Activated CD8-positive, alpha-beta T cell treated with anti-CD3 and anti-CD28 coated beads for 36 hours (primary cell): ENCODE measurements at regions of chr17 and their contacts with region 1.

Region 1: DNA sequence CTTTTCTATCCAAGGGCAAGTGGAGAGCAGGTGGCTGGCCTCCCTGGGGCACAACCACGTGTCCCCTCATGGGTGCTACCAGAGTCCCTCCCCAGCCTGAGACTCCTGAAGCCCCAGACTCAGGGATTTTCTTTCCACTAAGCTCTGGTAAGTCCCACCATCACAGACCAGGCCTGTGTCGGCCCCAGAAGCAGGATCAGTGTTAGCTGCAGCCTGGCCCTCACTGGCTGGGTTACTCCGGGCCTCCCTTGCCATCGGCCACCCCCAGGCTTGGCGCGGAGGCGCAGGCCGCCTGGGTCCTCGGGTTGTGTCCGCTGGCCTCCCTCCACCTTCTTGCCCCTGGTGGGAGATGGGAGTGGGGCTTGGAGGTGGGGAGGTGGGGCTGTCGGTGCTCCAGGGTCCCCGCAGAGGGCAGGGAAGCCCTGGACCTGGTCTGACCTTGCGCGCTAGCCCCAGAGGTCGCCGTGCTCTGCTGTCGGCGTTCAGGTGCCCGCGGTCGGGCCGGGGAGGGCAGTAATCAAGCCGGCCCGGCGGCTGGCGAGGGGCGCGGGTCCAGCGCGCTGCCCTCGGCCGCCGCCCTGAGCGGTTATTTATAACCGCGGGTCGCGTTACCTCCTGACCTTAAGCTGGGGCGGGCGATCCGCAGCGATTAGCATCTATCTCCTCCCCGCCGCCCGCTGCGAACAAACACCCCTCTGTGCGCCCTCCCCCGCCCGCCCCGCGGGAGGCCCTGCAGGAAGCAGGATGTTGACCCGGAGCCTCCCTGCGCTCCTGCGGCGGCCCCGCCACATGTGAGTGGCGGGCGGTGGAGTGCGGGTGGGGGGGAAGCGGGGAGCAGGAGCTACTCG is 78.1 kb upstream of the TOB1 start:
- DNase-seq: peak; percentile 89
- ATAC-seq: peak; percentile 88
- H3K4me3 Mint-ChIP-seq: peak overlapping the region; percentile 79
- H3K27ac Mint-ChIP-seq: peak overlapping the region; percentile 86
- H3K4me1 Mint-ChIP-seq: peaks cover 25% of the 10 kb centered on the region
- H3K27me3 Mint-ChIP-seq: no peaks in the 10 kb centered on the region
- CTCF ChIP-seq: no peak

Region 2: GRCh38 chr17:50806141-50806643 is 138.1 kb before region 1 on chr17:
- CTCF ChIA-PET with region 1: no interaction called
- POLR2A ChIA-PET with region 1: no interaction called
- intact Hi-C with region 1: no loop called
- DNase-seq: peak; percentile 14
- ATAC-seq: no peak
- H3K4me3 Mint-ChIP-seq: no peak overlapping the region
- H3K27ac Mint-ChIP-seq: no peak overlapping the region
- H3K4me1 Mint-ChIP-seq: no peaks in the 10 kb centered on the region
- H3K27me3 Mint-ChIP-seq: no peaks in the 10 kb centered on the region
- CTCF ChIP-seq: no peak

Region 3: DNA sequence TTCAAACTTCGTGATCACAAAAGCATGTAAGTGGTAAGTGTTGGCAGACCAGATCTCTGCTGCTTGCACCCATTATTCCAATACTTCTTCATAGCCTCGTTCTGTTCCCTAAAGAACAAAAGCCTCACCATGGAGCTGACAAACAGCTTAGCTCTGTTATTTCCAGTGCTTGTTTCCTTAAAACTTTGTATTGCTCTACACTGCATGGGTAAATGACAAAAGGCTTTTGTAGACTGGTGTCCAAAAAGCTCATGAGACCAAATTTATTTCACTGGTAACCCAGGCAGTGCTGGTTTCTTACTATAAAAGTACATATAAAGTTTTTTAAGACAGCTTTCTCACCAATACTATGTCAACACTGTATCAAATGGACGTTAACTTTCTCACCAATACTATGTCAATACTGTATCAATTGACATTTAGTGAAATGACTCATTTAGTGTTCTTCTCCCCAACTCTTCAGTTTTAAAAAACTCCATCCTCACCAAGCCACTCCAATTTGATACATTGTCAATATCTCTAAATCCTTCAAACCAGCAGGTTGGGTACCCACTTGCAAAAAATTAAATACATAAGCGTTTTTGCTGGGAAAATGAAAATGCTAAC is 83.1 kb before region 1 on chr17:
- CTCF ChIA-PET with region 1: interaction called, 39 read pairs
- POLR2A ChIA-PET with region 1: interaction called, 100 read pairs
- intact Hi-C with region 1: no loop called
- DNase-seq: no peak
- ATAC-seq: no peak
- H3K4me3 Mint-ChIP-seq: no peak overlapping the region
- H3K27ac Mint-ChIP-seq: no peak overlapping the region
- H3K4me1 Mint-ChIP-seq: peaks cover 26% of the 10 kb centered on the region
- H3K27me3 Mint-ChIP-seq: no peaks in the 10 kb centered on the region
- CTCF ChIP-seq: no peak